PC-9 (cell line): ENCODE measurements at regions of chr5 and their contacts with region 1.

Region 1: DNA sequence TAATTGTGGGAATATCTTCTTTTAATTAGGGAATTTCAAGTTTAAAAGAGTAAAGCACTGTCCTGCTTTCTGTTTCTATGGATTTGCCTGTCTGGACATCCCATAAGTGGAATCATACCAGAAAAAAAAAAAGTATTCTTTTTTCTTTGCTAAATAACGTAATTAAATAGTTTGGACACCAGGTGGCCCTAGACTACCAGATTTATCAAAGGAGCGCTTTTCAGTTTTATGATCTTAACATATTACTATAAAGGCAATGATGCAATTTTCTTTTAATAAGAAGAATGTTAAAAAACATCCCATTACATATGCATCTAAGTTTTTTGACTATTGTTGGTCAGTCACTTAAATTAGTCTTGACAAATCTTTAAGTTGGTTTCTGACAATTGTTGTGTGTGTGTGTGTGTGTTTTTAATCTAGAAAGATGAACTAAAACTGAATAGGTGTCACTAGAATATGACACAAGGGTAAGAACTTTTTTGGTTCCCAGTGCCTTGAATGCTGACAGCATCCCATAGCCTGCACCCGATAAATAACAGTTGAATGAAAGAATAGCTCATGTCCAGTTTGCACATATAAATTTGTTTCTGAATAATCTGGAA is 49.5 kb downstream of the C5orf22 start:
- DNase-seq: no peak
- H3K4me3 ChIP-seq: no peak overlapping the region
- H3K27ac ChIP-seq: no peak overlapping the region
- H3K4me1 ChIP-seq: no peaks in the 10 kb centered on the region
- H3K27me3 ChIP-seq: peaks cover 73% of the 10 kb centered on the region
- CTCF ChIP-seq: peak; percentile 88

Region 2: GRCh38 chr5:31029925-31030324 is 551.7 kb before region 1 on chr5:
- CTCF ChIA-PET with region 1: no interaction called
- POLR2A ChIA-PET with region 1: no interaction called
- intact Hi-C with region 1: no loop called
- DNase-seq: no peak
- H3K4me3 ChIP-seq: no peak overlapping the region
- H3K27ac ChIP-seq: no peak overlapping the region
- H3K4me1 ChIP-seq: no peaks in the 10 kb centered on the region
- H3K27me3 ChIP-seq: no peaks in the 10 kb centered on the region
- CTCF ChIP-seq: no peak

Region 3: GRCh38 chr5:31809050-31809870 is 227.7 kb after region 1 on chr5:
- CTCF ChIA-PET with region 1: no interaction called
- POLR2A ChIA-PET with region 1: no interaction called
- intact Hi-C with region 1: loop called (anchors 1 kb)
- DNase-seq: peak in 1 of 2 experiments; percentile 67
- H3K4me3 ChIP-seq: no peak overlapping the region
- H3K27ac ChIP-seq: no peak overlapping the region
- H3K4me1 ChIP-seq: no peaks in the 10 kb centered on the region
- H3K27me3 ChIP-seq: peaks cover 69% of the 10 kb centered on the region
- CTCF ChIP-seq: peak; percentile 61

Region 4: GRCh38 chr5:32076699-32077695 is 495.4 kb after region 1 on chr5:
- CTCF ChIA-PET with region 1: interaction called, 4 read pairs
- POLR2A ChIA-PET with region 1: interaction called, 6 read pairs
- intact Hi-C with region 1: loop called (anchors 1 kb)
- DNase-seq: peak; percentile 47
- H3K4me3 ChIP-seq: no peak overlapping the region
- H3K27ac ChIP-seq: no peak overlapping the region
- H3K4me1 ChIP-seq: no peaks in the 10 kb centered on the region
- H3K27me3 ChIP-seq: peaks cover 20% of the 10 kb centered on the region
- CTCF ChIP-seq: peak; percentile 90

Region 5: DNA sequence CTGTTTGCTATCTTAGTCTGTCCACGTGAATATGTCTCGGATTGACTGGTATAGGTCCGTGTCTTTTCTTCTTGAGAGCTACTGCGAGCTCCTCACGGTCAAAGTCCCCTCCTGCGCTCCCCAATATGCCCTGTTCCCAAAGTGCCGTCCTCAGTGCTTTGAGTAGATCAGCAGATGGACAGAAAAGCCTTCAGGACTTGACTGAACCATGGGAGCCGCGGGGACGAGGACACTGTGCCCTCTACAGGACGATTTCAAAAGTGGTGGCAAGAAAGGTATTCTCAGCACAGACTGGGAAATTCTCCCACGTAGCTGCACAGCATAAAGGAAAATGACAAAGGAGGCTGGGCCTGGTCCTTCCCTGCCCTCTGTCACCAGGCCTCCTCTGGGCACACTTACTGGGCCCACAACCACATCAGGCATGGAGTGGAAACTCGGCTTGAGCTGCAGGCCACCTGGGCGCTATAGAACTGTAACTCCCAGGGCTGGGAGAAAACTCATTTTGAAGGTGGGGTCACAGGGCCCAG is 747.8 kb after region 1 on chr5:
- CTCF ChIA-PET with region 1: no interaction called
- POLR2A ChIA-PET with region 1: no interaction called
- intact Hi-C with region 1: loop called (anchors 10 kb)
- DNase-seq: peak; percentile 60 to 72
- H3K4me3 ChIP-seq: no peak overlapping the region
- H3K27ac ChIP-seq: no peak overlapping the region
- H3K4me1 ChIP-seq: peaks cover 14% of the 10 kb centered on the region
- H3K27me3 ChIP-seq: no peaks in the 10 kb centered on the region
- CTCF ChIP-seq: peak; percentile 83

Region 6: DNA sequence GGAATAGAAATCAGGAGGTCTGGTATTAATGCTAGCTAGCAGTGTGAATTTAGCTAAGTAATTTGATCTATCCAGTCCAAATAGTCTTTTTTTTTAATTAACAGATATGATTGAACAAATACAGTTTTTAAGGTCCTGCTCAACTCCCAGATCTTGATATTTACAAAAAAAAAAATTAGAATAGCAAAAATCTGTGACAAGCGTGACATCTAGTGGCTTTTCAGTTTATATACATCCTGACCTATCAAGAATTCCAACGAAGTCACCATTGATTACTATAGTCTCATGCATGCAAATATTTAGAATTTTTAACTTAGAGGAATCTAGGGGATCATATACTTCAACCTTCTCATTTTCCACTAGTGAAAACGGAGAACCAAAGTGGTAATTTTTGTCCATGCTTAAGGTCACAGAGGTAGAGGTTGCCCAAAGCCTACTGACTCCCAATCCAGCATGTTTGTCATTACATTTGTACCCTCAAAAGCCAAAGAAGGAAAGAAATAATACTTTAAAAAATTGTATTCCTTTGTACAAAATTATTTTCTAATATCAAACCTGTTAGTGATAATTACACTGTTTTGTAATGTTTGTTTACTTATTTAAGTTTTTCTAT is 1841.5 kb after region 1 on chr5:
- CTCF ChIA-PET with region 1: no interaction called
- POLR2A ChIA-PET with region 1: no interaction called
- intact Hi-C with region 1: loop called (anchors 5 kb)
- DNase-seq: no peak
- H3K4me3 ChIP-seq: no peak overlapping the region
- H3K27ac ChIP-seq: no peak overlapping the region
- H3K4me1 ChIP-seq: no peaks in the 10 kb centered on the region
- H3K27me3 ChIP-seq: no peaks in the 10 kb centered on the region
- CTCF ChIP-seq: peak; percentile 84